ENCODE measurements at regions of chr15 and their contacts with region 1.

Region 1: DNA sequence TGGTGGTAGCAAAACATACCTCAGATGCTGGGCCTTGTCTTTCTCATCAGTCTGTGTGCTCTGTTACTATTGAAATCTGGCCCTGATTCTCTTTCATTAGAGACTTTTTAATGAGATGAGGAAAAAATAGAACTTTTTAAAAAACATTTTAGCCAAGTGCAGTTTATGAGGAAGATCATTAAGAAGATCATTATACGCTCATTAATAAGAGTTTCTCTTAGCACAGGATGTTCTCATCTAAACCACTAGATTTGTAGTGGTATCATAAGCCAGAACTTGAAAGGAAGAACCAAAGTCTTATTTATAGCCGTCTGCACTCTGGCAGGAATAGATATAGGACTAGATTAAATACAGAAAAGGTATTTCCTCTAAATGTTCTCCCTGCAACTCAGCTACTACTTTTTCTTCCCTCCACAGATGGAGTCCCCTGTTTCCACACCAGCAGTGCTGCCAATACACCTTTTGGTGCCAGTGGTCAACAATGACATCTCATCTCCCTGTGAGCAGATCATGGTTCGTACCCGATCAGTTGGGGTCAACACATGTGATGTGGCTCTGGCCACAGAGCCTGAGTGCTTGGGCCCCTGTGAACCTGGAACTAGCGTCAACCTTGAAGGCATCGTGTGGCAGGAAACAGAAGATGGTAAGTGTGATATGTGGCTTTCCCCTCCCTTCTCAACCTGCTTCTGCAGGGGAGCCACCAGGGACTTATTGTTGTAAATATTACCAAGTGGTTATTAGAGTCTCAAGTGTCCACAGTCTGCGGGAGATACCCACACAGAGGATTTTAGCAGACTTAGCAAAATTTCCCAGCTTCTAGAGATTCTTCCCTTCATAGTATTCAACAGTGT is 152.8 kb downstream of the RBPMS2 start:
- DNase-seq: peak; percentile 12 to 83 (median 42)
- ATAC-seq: peak; percentile 80
- H3K4me3 ChIP-seq: peak overlapping the region; percentile 35
- H3K4me3 Mint-ChIP-seq: peak overlapping the region; percentile 81
- H3K27ac ChIP-seq: peak overlapping the region; percentile 13 to 59
- H3K27ac Mint-ChIP-seq: peak overlapping the region; percentile 86
- H3K4me1 ChIP-seq: peaks cover 86% of the 10 kb centered on the region
- H3K4me1 Mint-ChIP-seq: peaks cover 93% of the 10 kb centered on the region
- H3K27me3 ChIP-seq: no peaks in the 10 kb centered on the region
- H3K27me3 Mint-ChIP-seq: no peaks in the 10 kb centered on the region
- CTCF ChIP-seq: no peak

Region 2: DNA sequence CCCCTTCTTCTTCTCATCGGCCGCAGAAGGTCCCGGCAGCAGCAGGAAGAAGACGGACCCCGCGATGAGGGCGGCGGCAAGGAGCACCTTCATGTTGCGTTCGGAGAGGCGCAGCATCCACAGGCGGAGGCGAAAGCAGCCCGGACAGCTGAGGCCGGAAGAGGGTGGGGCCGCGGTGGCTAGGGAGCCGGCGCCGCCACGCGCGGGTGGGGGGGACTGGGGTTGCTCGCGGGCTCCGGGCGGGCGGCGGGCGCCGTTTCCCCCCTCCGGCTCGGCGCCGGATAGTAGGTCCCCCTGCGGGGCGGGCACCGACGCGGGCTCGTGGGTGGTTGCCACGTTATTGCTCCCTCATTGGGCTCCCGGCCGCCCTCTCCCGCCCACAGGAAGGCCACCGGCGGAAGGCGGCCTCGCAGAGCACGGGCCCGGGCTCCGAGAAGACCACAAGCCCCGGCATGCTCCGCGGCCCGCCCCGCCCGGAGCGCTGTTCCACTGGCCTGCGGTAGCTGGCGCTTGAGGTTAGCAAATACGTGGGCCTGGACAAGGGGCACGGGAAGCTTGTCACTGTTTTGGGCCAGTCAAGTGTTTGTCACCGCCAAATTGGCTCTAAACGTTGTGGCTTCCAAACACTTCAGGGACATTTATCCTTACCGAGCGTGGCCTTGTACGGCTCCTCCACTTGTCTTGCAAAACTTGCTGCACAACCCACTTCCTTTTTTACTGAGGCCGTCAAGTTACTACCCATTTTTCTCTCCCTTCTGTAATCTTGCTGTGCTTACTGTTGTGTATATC is 459.6 kb before region 1 on chr15 and contains the start of gene PPIB:
- CTCF ChIA-PET with region 1: no interaction called
- POLR2A ChIA-PET with region 1: no interaction called
- intact Hi-C with region 1: no loop called
- DNase-seq: peak; percentile 91 to 98 (median 96)
- ATAC-seq: peak; percentile 92
- H3K4me3 ChIP-seq: peak within 1 kb of the TSS; percentile 77
- H3K4me3 Mint-ChIP-seq: peak within 1 kb of the TSS; percentile 89
- H3K27ac ChIP-seq: peak within 1 kb of the TSS; percentile 77 to 80
- H3K27ac Mint-ChIP-seq: peak within 1 kb of the TSS; percentile 87
- H3K4me1 ChIP-seq: peaks cover 57% of the 10 kb centered on the region
- H3K4me1 Mint-ChIP-seq: peaks cover 48% of the 10 kb centered on the region
- H3K27me3 ChIP-seq: no peaks in the 10 kb centered on the region
- H3K27me3 Mint-ChIP-seq: no peaks in the 10 kb centered on the region
- CTCF ChIP-seq: peak; percentile 42
- total RNA-seq, gene PPIB: 167 to 169 TPM

Region 3: GRCh38 chr15:64430000-64430735 is 192.5 kb before region 1 on chr15:
- CTCF ChIA-PET with region 1: interaction called, 3 read pairs
- POLR2A ChIA-PET with region 1: interaction called, 8 read pairs
- intact Hi-C with region 1: loop called in 1 of 2 experiments (anchors 10 kb)
- DNase-seq: peak in 13 of 14 experiments; percentile 17 to 85 (median 37)
- ATAC-seq: peak; percentile 91
- H3K4me3 ChIP-seq: peak overlapping the region; percentile 12
- H3K4me3 Mint-ChIP-seq: peak overlapping the region; percentile 79
- H3K27ac ChIP-seq: peak overlapping the region; percentile 31 to 52
- H3K27ac Mint-ChIP-seq: peak overlapping the region; percentile 97
- H3K4me1 ChIP-seq: peaks cover 36% of the 10 kb centered on the region
- H3K4me1 Mint-ChIP-seq: peaks cover 52% of the 10 kb centered on the region
- H3K27me3 ChIP-seq: no peaks in the 10 kb centered on the region
- H3K27me3 Mint-ChIP-seq: no peaks in the 10 kb centered on the region
- CTCF ChIP-seq: no peak

Region 4: GRCh38 chr15:64582202-64582601 is 40.4 kb before region 1 on chr15:
- CTCF ChIA-PET with region 1: no interaction called
- POLR2A ChIA-PET with region 1: no interaction called
- intact Hi-C with region 1: loop called in 1 of 2 experiments (anchors 5 kb)
- DNase-seq: no peak
- ATAC-seq: no peak
- H3K4me3 ChIP-seq: no peak overlapping the region
- H3K4me3 Mint-ChIP-seq: no peak overlapping the region
- H3K27ac ChIP-seq: no peak overlapping the region
- H3K27ac Mint-ChIP-seq: peak overlapping the region; percentile 31
- H3K4me1 ChIP-seq: peaks cover 33% of the 10 kb centered on the region
- H3K4me1 Mint-ChIP-seq: peaks cover 58% of the 10 kb centered on the region
- H3K27me3 ChIP-seq: no peaks in the 10 kb centered on the region
- H3K27me3 Mint-ChIP-seq: no peaks in the 10 kb centered on the region
- CTCF ChIP-seq: no peak

Region 5: GRCh38 chr15:64634576-64635498 is 12.2 kb after region 1 on chr15:
- CTCF ChIA-PET with region 1: interaction called, 3 read pairs
- POLR2A ChIA-PET with region 1: interaction called, 15 read pairs
- intact Hi-C with region 1: loop called in 1 of 2 experiments (anchors 2 kb)
- DNase-seq: peak in 5 of 14 experiments; percentile 10 to 57 (median 42)
- ATAC-seq: peak; percentile 57
- H3K4me3 ChIP-seq: peak overlapping the region; percentile 22
- H3K4me3 Mint-ChIP-seq: peak overlapping the region; percentile 62
- H3K27ac ChIP-seq: peak overlapping the region in 1 of 2 donors; percentile 51
- H3K27ac Mint-ChIP-seq: peak overlapping the region; percentile 80
- H3K4me1 ChIP-seq: peaks cover 71% of the 10 kb centered on the region
- H3K4me1 Mint-ChIP-seq: peaks cover 82% of the 10 kb centered on the region
- H3K27me3 ChIP-seq: no peaks in the 10 kb centered on the region
- H3K27me3 Mint-ChIP-seq: no peaks in the 10 kb centered on the region
- CTCF ChIP-seq: no peak

Measured in CD4-positive, alpha-beta T cell (primary cell).